ENCODE measurements at regions of chr12 and their contacts with region 1.

Region 1: GRCh38 chr12:57888409-57889157 is 42.1 kb upstream of the CTDSP2 start:
- DNase-seq: peak in 4 of 7 donors; percentile 21 to 71 (median 59)
- H3K4me3 ChIP-seq: no peak overlapping the region
- H3K27ac ChIP-seq: peak overlapping the region in 4 of 5 donors; percentile 40 to 97 (median 64)
- H3K4me1 ChIP-seq: peaks cover 26 to 63% of the 10 kb centered on the region in 2 donors
- H3K27me3 ChIP-seq: no peaks in the 10 kb centered on the region
- CTCF ChIP-seq: no peak
- POLR2A ChIP-seq: no peak

Region 2: GRCh38 chr12:57852620-57853500 is 35.7 kb before region 1 on chr12:
- intact Hi-C with region 1: loop called in 1 of 2 experiments (anchors 5 kb)
- DNase-seq: peak in 1 of 7 donors; percentile 36
- H3K4me3 ChIP-seq: peak overlapping the region in 2 of 4 donors; percentile 12 to 47
- H3K27ac ChIP-seq: peak overlapping the region in 2 of 5 donors; percentile 56 to 67
- H3K4me1 ChIP-seq: peaks cover 0 to 21% of the 10 kb centered on the region in 2 donors
- H3K27me3 ChIP-seq: no peaks in the 10 kb centered on the region
- CTCF ChIP-seq: peak in 1 of 6 experiments; percentile 12
- POLR2A ChIP-seq: no peak

Measured in adrenal gland (tissue), 19 donors.